AG04450 (cell line): ENCODE measurements at regions of chr1 and their contacts with region 1.

Region 1: DNA sequence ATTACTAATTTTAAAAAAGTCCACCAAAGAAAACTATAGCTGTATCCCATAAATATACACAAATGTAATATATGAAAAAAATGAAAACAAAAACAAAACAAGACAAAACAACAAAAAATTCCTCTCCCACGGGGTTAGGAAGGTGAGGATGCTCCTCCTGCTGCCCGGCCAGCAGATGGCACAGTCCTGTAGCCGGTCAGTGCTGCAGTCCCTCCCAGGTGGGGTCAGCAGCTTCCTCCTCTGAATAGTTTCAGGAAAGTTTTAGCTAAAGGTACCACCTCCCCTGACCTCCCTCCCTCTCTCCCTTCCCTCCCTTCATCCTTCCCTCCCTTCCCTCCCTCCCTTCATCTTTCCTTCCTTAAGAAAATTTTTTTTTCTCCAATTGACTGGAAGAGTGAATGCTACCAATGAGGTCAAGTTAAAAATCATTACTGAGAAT is 67.8 kb upstream of the BCL10 start:
- DNase-seq: no peak
- H3K4me3 ChIP-seq: no peak overlapping the region
- H3K27ac ChIP-seq: peak overlapping the region; percentile 69
- H3K27me3 ChIP-seq: no peaks in the 10 kb centered on the region
- CTCF ChIP-seq: peak; percentile 68

Region 2: DNA sequence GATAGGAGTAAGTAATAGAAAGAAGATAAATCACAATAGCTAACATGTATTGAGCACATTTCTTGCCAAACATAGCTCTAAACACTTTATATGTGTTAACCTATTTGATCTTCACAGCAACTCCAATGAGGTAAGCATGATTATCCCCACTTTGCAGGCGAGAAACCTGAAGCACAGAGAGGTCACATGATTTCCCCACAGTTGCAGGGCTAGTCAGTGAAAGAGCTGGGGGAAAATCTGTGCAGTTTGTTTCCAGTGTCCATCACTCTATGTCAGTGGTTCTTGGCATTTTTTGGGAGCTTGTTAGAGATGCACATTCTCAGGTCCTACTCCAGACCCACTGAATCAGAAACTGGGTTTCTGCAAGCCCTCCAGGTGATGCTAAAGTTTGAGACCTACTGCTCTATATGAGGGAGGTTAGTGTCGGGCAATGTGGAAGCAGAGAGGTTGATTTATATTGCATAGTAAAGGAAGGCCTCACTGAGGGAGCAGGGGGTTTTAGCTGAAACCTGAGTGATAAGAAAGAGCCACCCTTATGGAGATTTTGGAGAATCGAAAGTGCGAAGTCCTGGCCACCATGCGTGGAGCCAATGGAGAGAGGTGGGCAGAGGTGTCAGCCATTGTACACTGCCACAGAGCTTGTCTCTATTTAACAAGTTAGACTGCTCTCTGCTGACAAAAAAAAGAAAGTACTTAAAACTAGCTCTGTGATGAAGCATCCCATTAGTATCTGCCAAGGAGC is 316.9 kb before region 1 on chr1:
- CTCF ChIA-PET with region 1: no interaction called
- POLR2A ChIA-PET with region 1: no interaction called
- DNase-seq: no peak
- H3K4me3 ChIP-seq: no peak overlapping the region
- H3K27ac ChIP-seq: no peak overlapping the region
- H3K27me3 ChIP-seq: peaks cover 3% of the 10 kb centered on the region
- CTCF ChIP-seq: no peak

Region 3: GRCh38 chr1:85276215-85276977 is 67.9 kb before region 1 on chr1 and contains the start of gene BCL10:
- CTCF ChIA-PET with region 1: no interaction called
- POLR2A ChIA-PET with region 1: no interaction called
- DNase-seq: peak; percentile 94
- H3K4me3 ChIP-seq: peak within 1 kb of the TSS; percentile 98
- H3K27ac ChIP-seq: peak within 1 kb of the TSS; percentile 92
- H3K27me3 ChIP-seq: no peaks in the 10 kb centered on the region
- CTCF ChIP-seq: no peak
- polyA plus RNA-seq, gene BCL10: 17.2 and 19.4 TPM in 2 replicates

Region 4: GRCh38 chr1:85330711-85331290 is 13.5 kb before region 1 on chr1:
- CTCF ChIA-PET with region 1: interaction called, 19 read pairs
- POLR2A ChIA-PET with region 1: interaction called, 5 read pairs
- DNase-seq: peak; percentile 91
- H3K4me3 ChIP-seq: no peak overlapping the region
- H3K27ac ChIP-seq: peak overlapping the region; percentile 96
- H3K27me3 ChIP-seq: no peaks in the 10 kb centered on the region
- CTCF ChIP-seq: 0 out of 2 replicates have a peak, but pooled peaks have one; percentile 7

Region 5: GRCh38 chr1:85360730-85361493 is 16.6 kb after region 1 on chr1:
- CTCF ChIA-PET with region 1: interaction called, 15 read pairs
- POLR2A ChIA-PET with region 1: no interaction called
- DNase-seq: peak; percentile 36
- H3K4me3 ChIP-seq: peak overlapping the region; percentile 2; the same call in 1 of the 2 replicates
- H3K27ac ChIP-seq: peak overlapping the region; percentile 42
- H3K27me3 ChIP-seq: no peaks in the 10 kb centered on the region
- CTCF ChIP-seq: no peak

Region 6: DNA sequence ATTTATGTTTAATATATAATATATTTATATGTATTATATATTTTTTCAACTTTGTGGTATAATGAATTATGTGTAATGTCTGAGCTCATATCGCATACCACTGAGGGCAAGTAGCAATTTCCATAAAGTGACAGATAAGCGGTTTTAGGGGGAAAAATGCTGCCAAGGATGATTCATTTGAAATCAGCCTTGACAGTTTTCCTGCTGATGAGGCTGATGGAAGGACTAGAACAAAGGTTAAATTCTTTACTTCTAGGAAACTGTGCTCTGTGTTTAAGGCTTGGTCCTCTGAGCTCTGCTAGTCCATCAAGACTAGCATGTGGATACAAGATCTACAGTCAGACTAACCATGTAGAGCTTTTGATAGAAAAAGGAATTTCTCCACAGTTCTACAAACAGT is 140.0 kb after region 1 on chr1:
- CTCF ChIA-PET with region 1: no interaction called
- POLR2A ChIA-PET with region 1: no interaction called
- DNase-seq: no peak
- H3K4me3 ChIP-seq: no peak overlapping the region
- H3K27ac ChIP-seq: no peak overlapping the region
- H3K27me3 ChIP-seq: no peaks in the 10 kb centered on the region
- CTCF ChIP-seq: no peak